Activated T-helper 2 cell treated with anti-CD3 and anti-CD28 coated beads, Interferon-gamma antibody, Interleukin-2, Interleukin-4, amounts not matched to agents 10 μg/mL and 5 μg/mL and 100 μg/mL, durations not matched to agents 14 hours and 24 hours and 36 hours (primary cell): ENCODE measurements at regions of chr2 and their contacts with region 1.

Region 1: GRCh38 chr2:152335010-152335725 is at the start of gene FMNL2:
- DNase-seq: peak; percentile 55
- H3K4me3 Mint-ChIP-seq: peak within 1 kb of the TSS; percentile 90
- H3K27ac Mint-ChIP-seq: peak within 1 kb of the TSS; percentile 51
- H3K4me1 Mint-ChIP-seq: peaks cover 17% of the 10 kb centered on the region
- H3K27me3 Mint-ChIP-seq: peaks cover 39% of the 10 kb centered on the region
- total RNA-seq, gene FMNL2: 14.0 and 14.3 TPM in 2 replicates

Region 2: GRCh38 chr2:152407204-152407721 is 72.1 kb after region 1 on chr2:
- intact Hi-C with region 1: loop called (anchors 2 kb)
- DNase-seq: no peak
- H3K4me3 Mint-ChIP-seq: peak overlapping the region; percentile 67
- H3K27ac Mint-ChIP-seq: peak overlapping the region; percentile 84
- H3K4me1 Mint-ChIP-seq: peaks cover 74% of the 10 kb centered on the region
- H3K27me3 Mint-ChIP-seq: no peaks in the 10 kb centered on the region

Region 3: DNA sequence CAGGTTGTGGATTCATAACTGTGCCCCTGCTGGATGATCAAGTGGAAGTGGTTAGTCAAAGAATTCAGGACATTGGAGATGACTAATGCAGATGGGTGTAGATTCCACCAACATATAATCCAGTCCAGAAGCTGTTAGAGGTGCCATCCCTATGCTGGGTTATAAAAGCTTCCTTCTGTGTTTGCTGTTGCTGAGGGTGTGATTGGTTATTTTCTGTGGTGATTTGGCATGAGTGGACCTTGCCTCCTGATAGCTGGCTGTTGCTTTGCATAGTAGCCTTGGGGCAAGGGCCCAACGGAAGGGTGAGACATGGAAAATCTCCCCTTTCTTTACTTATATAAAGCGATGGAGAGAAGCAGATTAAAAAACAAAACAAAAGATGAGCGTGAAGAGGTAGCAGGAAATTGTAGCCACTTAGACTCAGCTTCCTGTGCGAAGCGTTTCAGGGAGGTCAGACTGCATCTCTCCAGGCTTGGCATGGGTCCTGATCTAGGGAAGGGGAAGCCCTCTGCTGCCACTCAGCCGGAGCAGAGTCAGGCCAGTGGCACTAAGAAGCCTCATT is 190.2 kb after region 1 on chr2:
- intact Hi-C with region 1: loop called (anchors 10 kb)
- DNase-seq: no peak
- H3K4me3 Mint-ChIP-seq: no peak overlapping the region
- H3K27ac Mint-ChIP-seq: no peak overlapping the region
- H3K4me1 Mint-ChIP-seq: peaks cover 18% of the 10 kb centered on the region
- H3K27me3 Mint-ChIP-seq: peaks cover 3% of the 10 kb centered on the region

Region 4: GRCh38 chr2:152573168-152573567 is 238.0 kb after region 1 on chr2:
- intact Hi-C with region 1: loop called (anchors 5 kb)
- DNase-seq: peak; percentile 35
- H3K4me3 Mint-ChIP-seq: no peak overlapping the region
- H3K27ac Mint-ChIP-seq: peak overlapping the region; percentile 11
- H3K4me1 Mint-ChIP-seq: peaks cover 17% of the 10 kb centered on the region
- H3K27me3 Mint-ChIP-seq: peaks cover 2% of the 10 kb centered on the region

Region 5: DNA sequence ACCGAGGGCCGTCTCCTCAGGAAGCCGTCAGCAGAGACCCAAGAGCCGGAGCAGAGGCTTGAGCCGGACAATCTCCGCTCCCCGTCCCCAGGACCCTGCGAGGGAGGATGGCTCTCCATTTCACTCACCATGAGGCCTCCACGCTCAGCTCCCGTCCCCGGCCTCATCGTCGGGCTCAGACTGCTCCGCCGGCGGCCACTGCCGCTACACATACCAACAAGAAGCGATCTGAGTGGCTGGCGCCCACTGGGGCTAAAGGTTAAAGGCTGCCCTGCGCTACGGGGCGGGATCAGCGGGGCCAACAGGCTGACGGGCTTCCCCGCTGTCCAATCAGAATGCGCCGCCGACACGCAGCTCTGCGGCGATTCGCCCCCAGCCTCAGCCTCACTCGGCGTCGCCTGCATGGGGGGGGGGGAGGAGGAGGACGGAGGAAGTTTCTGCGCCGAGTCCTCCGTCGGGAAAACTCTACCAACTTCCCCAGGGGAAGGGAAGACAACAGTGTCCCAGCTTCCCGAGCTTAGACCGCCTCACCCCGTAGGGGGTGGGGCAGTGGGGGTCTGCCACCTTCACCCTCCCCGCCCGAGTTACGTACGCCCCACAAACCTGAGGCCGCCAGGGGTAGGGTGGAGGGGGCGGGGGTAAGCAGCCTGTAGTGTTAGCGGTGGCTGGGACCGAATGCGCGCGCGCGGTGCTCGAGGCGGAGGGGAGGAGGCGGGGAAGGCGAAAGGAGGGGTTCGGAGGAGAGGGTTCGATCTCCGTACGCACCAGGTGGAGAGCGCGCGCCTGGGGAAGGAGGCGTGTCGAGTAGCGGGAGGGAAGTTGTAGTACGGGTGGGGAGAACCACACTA is 382.3 kb after region 1 on chr2 and contains the start of gene PRPF40A:
- intact Hi-C with region 1: loop called (anchors 1 kb)
- DNase-seq: peak; percentile 97
- H3K4me3 Mint-ChIP-seq: peak within 1 kb of the TSS; percentile 98
- H3K27ac Mint-ChIP-seq: peak within 1 kb of the TSS; percentile 98
- H3K4me1 Mint-ChIP-seq: peaks cover 46% of the 10 kb centered on the region
- H3K27me3 Mint-ChIP-seq: no peaks in the 10 kb centered on the region
- total RNA-seq, gene PRPF40A: 144 and 170 TPM in 2 replicates